Lower leg skin (tissue), 4 donors: ENCODE measurements at regions of chr3 and their contacts with region 1.

Region 1: DNA sequence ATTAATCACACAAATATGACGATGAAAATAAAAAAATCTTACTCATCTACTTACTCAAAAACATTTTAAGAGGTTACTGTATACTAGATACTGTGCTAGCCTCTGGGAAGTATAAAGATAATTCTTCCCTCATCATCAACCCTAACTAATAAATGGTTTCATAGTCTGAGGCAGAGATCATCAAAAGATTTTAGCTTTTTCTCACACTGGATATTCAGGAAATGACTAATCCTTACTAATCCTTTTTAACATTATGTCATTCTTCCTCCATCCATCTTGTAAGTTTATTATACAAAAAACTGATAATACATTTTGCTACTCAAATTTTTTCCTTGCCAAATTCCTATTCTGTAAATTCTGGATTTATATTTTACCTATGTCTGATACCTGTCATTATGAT is 29.7 kb downstream of the ACAD11 start:
- DNase-seq: no peak
- H3K4me3 ChIP-seq: no peak overlapping the region
- CTCF ChIP-seq: no peak
- POLR2A ChIP-seq: no peak

Region 2: GRCh38 chr3:132456571-132456970 is 173.4 kb before region 1 on chr3:
- intact Hi-C with region 1: no loop called
- DNase-seq: no peak
- H3K4me3 ChIP-seq: no peak overlapping the region
- CTCF ChIP-seq: no peak
- POLR2A ChIP-seq: no peak

Region 3: GRCh38 chr3:132549890-132550578 is 79.9 kb before region 1 on chr3:
- intact Hi-C with region 1: loop called (anchors 10 kb)
- DNase-seq: no peak
- H3K4me3 ChIP-seq: no peak overlapping the region
- CTCF ChIP-seq: no peak
- POLR2A ChIP-seq: no peak